ENCODE measurements at regions of chr18 and their contacts with region 1.

Region 1: DNA sequence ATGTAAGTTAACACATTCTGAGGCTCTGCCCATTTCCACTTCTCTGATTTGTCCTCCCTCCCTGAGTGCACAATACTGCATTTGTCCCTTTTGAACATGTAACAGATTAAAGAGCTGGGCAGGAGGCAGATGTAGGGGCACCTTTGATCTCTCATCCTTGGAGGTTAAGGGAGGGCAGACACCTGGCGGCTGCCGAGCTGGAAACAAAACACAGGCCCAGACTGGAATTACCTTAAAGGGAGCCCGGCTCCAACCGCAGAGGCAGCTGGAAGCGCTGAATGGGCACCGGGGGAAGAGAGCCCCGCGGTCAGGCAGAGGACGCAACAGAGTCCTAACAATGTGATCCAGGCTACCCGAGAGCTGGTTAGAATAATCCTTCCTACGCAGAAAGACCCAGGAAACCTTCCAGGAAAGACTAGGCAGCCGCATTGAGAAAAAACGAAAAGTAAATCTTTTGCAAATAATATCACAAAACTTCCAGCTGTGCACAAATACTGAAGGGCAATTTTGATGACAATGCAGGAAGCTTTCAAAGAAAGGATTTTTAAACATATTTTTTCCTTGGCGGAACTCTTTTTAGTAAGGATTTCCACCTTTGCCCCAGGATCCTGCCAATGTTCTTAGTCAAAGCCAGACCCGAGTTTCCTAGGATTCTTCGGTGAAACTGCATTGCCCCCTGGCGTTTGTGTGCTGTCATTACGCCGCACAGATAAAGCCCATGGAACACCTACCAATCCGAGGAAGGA is 216.0 kb downstream of the TGIF1 start:
- DNase-seq: peak; percentile 81
- H3K4me3 ChIP-seq: peak overlapping the region; percentile 8 to 33 (median 8)
- H3K27ac ChIP-seq: peak overlapping the region; percentile 74
- H3K4me1 ChIP-seq: peaks cover 26% of the 10 kb centered on the region
- H3K27me3 ChIP-seq: no peaks in the 10 kb centered on the region
- CTCF ChIP-seq: peak; percentile 90 to 96

Region 2: DNA sequence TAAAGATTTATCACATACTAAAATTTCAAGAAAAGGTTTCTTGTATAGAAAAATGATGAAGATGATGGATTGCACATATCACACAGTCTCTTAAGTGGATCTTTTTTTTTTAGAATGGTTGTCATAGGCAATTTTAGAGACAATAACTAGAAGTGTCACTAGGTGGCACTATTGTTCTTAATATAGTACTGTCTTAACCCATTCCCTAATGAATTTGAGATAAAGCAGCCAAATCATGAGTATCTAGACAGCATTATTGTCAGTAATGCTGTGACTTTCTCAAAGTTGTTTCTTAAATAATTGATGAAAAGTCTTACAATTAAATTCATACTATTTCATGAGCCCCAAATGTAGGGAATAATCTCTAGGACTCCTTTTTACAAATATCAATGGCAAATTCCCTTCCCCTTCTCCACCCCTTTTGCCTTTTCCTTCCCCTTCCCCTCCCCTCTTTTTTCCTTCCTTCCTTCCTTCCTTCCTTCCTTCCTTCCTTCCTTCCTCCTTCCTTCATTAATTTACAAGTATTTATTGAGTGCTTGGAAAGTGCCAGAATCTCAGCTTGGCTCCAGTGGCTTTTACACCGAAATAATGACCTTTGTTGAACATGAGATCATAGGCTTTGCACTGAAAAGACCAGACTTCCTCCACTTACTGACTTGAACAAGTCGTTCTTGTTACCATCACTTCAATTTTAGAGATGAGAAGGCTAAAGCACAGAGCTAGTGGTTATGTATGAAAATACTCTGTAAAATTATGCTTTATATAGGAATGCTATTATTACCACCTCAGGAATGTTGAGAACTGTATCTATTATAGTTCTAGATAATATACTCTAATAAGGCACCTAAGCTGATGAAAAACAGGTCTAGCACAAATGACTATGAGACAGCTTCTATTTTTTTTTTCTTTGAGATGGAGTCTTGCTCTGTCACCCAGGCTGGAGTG is 384.2 kb before region 1 on chr18:
- CTCF ChIA-PET with region 1: interaction called, 24 read pairs
- dilution Hi-C with region 1: loop called (anchors 5 kb)
- in situ Hi-C with region 1: loop called (anchors 5 kb)
- intact Hi-C with region 1: loop called (anchors 1 kb)
- DNase-seq: peak; percentile 68
- H3K4me3 ChIP-seq: no peak overlapping the region
- H3K27ac ChIP-seq: no peak overlapping the region
- H3K4me1 ChIP-seq: no peaks in the 10 kb centered on the region
- H3K27me3 ChIP-seq: no peaks in the 10 kb centered on the region
- CTCF ChIP-seq: peak; percentile 36 to 53

Region 3: DNA sequence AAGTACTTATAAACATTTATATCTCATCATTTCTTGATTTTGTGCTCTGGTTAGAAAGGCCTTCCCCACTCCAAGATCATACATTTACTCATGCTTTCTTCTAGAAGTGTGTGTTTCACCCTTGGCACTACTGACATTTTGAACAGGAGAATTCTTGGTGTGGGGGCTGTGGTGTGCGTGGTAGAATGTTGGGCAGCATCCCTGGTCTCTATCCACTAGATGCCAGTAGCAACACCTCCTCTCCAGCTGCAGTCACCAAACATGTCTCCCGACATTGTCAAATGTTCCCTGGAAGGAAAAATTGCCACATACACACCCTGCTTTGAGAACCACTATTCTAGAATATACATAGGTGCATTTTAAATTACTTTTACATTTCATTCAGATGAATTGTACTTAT is 224.7 kb before region 1 on chr18:
- CTCF ChIA-PET with region 1: no interaction called
- dilution Hi-C with region 1: no loop called
- in situ Hi-C with region 1: no loop called
- intact Hi-C with region 1: loop called (anchors 1 kb)
- DNase-seq: no peak
- H3K4me3 ChIP-seq: no peak overlapping the region
- H3K27ac ChIP-seq: no peak overlapping the region
- H3K4me1 ChIP-seq: peaks cover 4% of the 10 kb centered on the region
- H3K27me3 ChIP-seq: no peaks in the 10 kb centered on the region
- CTCF ChIP-seq: peak in 1 of 2 donors; percentile 32

Region 4: DNA sequence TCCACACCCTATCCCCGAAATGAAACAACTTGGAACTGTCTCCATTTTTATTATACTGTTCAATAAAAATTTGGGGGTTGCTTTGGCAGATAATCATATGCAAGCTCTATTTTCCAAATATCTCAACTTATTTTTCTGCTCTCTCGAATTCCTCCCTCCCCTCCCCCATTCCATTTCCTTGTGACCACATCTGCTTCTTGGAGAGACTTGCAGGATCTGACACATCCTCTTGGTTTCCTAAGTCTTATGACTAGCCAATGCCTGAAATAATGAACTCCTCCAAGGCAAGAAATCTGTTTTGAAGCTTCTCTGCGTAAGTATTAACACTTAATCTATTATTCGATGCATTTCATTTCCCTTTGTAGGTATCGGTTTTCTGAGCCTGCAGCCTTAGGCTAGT is 199.9 kb before region 1 on chr18:
- CTCF ChIA-PET with region 1: interaction called, 11 read pairs
- dilution Hi-C with region 1: no loop called
- in situ Hi-C with region 1: loop called in 1 of 2 experiments (anchors 10 kb)
- intact Hi-C with region 1: no loop called
- DNase-seq: peak; percentile 79
- H3K4me3 ChIP-seq: no peak overlapping the region
- H3K27ac ChIP-seq: no peak overlapping the region
- H3K4me1 ChIP-seq: peaks cover 16% of the 10 kb centered on the region
- H3K27me3 ChIP-seq: no peaks in the 10 kb centered on the region
- CTCF ChIP-seq: no peak

Region 5: GRCh38 chr18:3572761-3573160 is 93.2 kb before region 1 on chr18:
- CTCF ChIA-PET with region 1: no interaction called
- dilution Hi-C with region 1: no loop called
- in situ Hi-C with region 1: no loop called
- intact Hi-C with region 1: no loop called
- DNase-seq: no peak
- H3K4me3 ChIP-seq: no peak overlapping the region
- H3K27ac ChIP-seq: no peak overlapping the region
- H3K4me1 ChIP-seq: no peaks in the 10 kb centered on the region
- H3K27me3 ChIP-seq: no peaks in the 10 kb centered on the region
- CTCF ChIP-seq: no peak

Region 6: DNA sequence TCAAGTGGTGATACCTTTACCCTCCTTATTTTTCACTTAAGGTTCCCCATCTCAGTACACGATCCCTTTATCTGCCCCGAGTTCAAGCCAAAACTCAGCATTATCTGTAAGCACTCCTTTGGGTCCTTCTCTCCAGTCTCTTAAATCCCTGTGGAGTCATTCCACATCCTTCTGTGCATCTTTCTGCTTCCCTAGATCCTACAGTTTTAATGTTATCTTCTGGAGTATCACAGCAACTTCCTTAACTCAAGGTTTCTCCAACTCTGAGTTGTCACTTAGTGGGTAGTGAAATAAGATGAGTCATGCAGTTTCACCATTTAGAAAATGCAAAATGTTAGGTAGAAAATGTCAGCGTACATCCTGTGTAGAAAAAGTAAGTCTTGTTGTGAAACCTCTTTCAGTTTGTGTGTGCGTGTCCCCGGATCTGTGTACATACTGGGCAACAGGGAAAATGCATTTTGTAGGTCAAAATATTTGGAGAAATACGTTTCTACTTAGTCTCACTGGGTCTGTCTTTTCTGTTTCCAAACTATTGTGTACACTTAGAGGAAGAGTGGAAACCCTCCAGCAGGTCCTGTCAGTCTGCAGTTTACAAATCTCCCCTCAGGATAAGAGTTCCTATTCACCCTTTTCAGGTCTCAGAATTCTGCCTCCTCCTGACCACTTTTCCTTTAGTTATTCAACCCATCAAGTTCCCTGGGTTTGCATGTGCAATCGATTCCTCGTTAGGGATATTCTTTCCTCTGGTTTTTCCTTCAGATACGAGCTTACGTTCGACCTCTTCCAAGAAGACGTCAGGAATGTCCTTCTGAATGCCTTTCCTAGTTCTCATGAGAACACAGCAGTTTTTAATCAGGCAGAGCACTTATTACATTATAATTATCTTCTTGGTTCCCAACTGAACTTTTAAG is 61.2 kb before region 1 on chr18:
- CTCF ChIA-PET with region 1: interaction called, 4 read pairs
- dilution Hi-C with region 1: loop called (anchors 5 kb)
- in situ Hi-C with region 1: loop called in 1 of 2 experiments (anchors 5 kb)
- intact Hi-C with region 1: loop called (anchors 1 kb)
- DNase-seq: peak; percentile 91
- H3K4me3 ChIP-seq: peak overlapping the region; percentile 25 to 53 (median 42)
- H3K27ac ChIP-seq: peak overlapping the region; percentile 99
- H3K4me1 ChIP-seq: peaks cover 35% of the 10 kb centered on the region
- H3K27me3 ChIP-seq: no peaks in the 10 kb centered on the region
- CTCF ChIP-seq: no peak

Region 7: DNA sequence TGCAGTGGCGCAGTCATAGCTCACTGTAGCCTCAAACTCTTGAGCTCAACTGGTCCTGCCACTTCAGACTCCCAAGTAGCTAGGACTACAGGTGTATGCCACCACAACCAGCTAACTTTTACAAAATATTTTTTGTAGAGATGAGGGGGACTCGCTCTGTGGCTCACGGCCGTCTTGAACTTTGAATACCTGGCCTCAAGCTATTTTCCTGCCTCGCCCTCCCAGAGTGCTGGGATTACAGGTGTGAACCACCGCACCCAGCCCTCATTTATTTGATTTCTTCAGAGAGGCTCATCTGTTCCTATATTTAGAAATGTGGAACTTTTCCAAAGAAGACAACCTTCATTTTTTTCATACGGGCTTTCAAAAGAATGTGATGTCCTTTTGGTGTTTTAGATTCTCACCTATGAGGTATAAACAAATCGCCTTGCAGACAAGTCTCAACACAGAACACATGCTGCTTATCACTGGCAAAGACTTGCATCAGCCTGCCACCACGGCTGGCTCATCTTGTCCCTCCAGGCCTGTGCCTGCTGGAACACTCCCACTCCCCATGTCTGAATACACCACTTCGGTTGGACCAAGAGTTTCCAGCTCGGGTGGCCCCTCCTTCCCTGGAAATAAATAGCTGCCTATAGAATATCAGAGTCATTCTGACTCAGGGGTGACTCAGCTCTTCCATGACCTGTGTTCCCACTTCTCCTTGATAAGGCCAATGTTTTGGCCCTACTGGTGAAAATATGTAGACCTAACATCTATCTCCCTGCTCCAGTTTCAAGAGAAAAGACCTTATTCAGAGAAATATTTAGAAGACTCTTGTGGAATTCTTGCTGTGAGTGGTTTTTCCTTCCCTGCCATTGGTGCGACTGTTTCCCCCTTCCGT is 13.3 kb before region 1 on chr18:
- CTCF ChIA-PET with region 1: interaction called, 7 read pairs
- dilution Hi-C with region 1: no loop called
- in situ Hi-C with region 1: no loop called
- intact Hi-C with region 1: loop called (anchors 1 kb)
- DNase-seq: peak; percentile 100
- H3K4me3 ChIP-seq: no peak overlapping the region
- H3K27ac ChIP-seq: peak overlapping the region; percentile 85
- H3K4me1 ChIP-seq: peaks cover 40% of the 10 kb centered on the region
- H3K27me3 ChIP-seq: no peaks in the 10 kb centered on the region
- CTCF ChIP-seq: peak in 1 of 2 donors; percentile 32

Region 8: GRCh38 chr18:3839481-3840075 is 173.6 kb after region 1 on chr18:
- CTCF ChIA-PET with region 1: no interaction called
- dilution Hi-C with region 1: no loop called
- in situ Hi-C with region 1: no loop called
- intact Hi-C with region 1: no loop called
- DNase-seq: peak; percentile 25
- H3K4me3 ChIP-seq: no peak overlapping the region
- H3K27ac ChIP-seq: no peak overlapping the region
- H3K4me1 ChIP-seq: no peaks in the 10 kb centered on the region
- H3K27me3 ChIP-seq: no peaks in the 10 kb centered on the region
- CTCF ChIP-seq: no peak

Region 9: DNA sequence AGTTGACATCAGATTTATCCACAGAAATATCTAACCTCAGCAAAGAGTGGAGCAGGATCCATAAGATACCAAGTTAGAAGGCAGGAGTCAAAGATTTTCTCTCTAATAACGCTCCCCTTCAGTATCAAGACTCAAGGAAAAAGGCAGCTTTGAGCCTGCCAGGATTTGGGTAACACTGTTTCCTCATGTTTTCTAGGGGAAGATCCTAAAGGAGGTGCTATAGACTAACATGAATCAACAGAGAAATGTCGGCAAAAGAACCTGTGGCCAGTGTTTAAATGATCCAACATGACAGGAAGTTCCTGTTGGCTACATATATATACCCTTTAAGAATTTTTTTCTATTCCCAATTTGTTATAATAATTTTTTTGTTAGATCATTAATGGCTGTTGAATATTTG is 186.4 kb after region 1 on chr18:
- CTCF ChIA-PET with region 1: no interaction called
- dilution Hi-C with region 1: no loop called
- in situ Hi-C with region 1: no loop called
- intact Hi-C with region 1: no loop called
- DNase-seq: no peak
- H3K4me3 ChIP-seq: no peak overlapping the region
- H3K27ac ChIP-seq: no peak overlapping the region
- H3K4me1 ChIP-seq: no peaks in the 10 kb centered on the region
- H3K27me3 ChIP-seq: no peaks in the 10 kb centered on the region
- CTCF ChIP-seq: no peak